ENCODE measurements at regions of chrX and their contacts with region 1.

Region 1: DNA sequence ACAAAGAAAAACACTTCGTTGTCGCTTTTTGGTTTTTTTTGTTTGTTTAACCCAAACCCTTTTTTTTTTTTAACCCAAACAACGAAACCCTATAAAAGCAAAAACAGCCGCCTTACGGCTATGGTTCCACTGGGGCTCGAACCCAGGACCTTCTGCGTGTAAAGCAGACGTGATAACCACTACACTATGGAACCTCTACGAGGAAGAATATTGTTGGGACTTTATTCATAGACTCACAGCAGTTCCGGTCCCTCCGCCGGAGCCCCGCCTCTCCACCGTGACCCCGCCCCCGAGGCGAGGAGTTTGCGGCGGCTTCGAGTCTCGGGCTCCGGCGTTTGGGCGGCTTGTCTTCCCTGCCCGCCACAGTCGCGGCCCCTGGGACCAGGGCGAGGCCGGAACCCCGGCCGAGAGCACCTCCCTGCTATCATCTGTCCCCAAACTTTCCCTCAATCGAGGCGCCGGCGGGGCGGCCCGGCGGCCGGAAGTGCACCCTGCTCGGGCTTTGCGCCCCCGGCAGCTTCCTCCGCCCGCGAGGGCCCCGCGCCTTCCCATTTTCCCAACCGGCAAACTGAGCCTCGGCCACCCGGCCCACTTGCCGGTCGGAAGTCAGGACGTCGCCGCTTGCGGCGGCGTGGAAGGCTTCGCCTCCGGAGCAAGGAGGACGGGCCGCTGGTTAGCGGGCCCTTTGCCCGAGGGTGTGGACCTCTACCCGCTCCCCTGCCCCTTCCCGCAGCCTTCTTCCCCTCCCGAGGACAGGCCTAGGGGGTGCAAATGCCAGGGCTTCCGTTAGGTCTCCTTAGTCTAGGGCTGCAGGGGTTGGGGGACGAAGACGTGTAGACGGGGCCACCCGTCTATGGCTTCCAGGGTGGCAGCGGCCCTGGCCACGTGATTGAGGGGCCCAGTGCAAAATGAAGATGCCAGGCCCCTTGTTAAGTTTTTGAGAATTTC is 3.2 kb upstream of the RS1 start:
- DNase-seq: peak; percentile 90

Region 2: DNA sequence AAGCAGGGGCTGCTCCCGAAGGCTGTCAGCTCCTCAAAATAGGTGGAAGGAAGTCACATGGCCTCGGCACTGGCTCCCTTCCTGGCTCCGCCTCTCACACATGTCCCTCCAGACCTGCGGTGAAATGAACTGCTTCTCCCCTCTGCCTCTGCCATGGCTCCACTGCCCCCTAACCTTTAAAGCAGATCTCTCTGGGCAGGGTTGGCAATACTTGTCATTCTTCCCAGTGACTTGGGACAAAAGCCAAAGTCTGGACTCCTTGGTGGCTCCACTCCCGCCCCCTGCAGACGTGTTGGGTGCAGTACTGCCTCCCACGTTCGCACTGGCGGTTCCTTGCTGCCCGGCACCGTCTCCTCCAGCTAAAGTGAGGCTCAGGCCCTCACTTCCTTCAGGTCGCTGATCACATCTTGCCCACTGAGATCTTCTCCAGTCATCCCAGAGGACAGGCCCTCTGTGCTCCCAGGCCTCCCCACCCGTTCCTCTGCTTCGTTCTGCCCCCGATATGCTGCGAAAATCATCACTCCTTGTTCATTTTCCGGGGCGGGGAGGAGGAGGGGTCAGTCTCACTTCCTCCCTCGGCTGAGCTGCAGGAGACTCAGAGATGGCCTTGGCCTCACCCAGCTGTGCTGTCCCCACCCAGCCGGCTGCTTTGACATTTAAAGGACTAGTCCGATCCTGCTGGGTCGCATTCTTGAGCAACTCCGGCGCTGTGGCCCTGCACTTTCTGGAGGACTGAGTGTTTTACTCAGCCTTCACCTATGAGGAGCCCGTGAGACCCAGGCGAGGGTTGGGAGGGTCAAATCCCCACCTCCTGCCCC is 211.5 kb after region 1 on chrX:
- intact Hi-C with region 1: loop called (anchors 5 kb)
- DNase-seq: peak; percentile 89

Measured in cardiac septum (tissue), 1 donor.